Cardiac septum (tissue), 1 donor: ENCODE measurements at regions of chr10 and their contacts with region 1.

Region 1: GRCh38 chr10:34677591-34677990 is 137.5 kb downstream of the PARD3 start:
- DNase-seq: no peak

Region 2: GRCh38 chr10:34716958-34717357 is 39.4 kb after region 1 on chr10:
- intact Hi-C with region 1: loop called (anchors 5 kb)
- DNase-seq: no peak